GM10248 (cell line): ENCODE measurements at regions of chr11 and their contacts with region 1.

Region 1: DNA sequence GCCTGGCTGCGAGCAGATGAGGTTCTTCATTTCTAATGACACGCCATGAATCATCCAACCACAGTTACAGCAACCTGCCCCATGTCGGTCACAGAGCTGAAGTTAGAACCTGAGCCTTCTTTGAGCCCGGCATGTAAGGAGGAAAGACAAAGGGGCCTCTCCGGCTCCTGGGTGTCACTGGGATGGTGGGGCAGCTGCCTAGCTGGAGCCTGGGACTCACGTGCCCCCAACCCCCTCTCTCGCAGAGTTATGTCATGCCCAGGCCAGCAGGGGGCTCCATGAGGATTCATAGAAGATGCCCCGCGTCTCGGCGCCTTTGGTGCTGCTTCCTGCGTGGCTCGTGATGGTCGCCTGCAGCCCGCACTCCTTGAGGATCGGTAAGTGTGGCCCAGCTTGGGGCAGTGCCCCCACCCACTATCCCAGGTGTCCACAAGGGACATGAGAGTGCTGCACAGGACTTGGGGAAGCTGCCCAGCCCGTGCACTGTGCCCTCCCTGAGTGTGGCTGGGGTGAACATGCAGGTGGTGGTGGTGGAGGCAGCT is 148.5 kb downstream of the GRIK4 start:
- DNase-seq: peak; percentile 75
- CTCF ChIP-seq: peak; percentile 44

Region 2: DNA sequence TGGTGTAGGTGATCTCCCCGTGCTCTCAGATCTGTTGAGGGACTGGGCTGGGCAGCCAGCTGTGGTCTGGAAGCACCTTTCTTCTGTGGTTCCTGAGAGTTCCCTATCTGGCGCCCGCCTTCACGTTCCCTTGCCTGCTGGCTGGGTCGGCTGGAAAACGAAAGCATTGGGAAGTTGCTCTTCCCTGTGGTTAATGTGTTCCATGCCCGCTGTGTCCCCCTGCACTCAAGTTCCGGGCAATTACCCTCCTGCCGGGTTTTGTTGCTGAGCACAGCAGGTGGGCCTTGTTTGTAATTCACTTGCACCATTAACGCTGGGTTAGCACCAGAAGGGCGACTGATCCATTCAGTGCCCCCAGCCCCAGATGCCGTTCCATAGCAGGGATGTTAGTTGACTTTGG is 14.5 kb before region 1 on chr11:
- CTCF ChIA-PET with region 1: interaction called, 12 read pairs
- POLR2A ChIA-PET with region 1: no interaction called
- DNase-seq: no peak
- CTCF ChIP-seq: no peak

Region 3: GRCh38 chr11:120674542-120674941 is 14.4 kb after region 1 on chr11:
- CTCF ChIA-PET with region 1: interaction called, 15 read pairs
- POLR2A ChIA-PET with region 1: no interaction called
- DNase-seq: no peak
- CTCF ChIP-seq: no peak